ENCODE measurements at regions of chr11 and their contacts with region 1.

Region 1: GRCh38 chr11:12224537-12224893 is 114.1 kb downstream of the MICAL2 start:
- DNase-seq: peak; percentile 94
- H3K4me3 Mint-ChIP-seq: peak overlapping the region; percentile 62
- H3K27ac Mint-ChIP-seq: peak overlapping the region; percentile 93
- H3K4me1 Mint-ChIP-seq: peaks cover 66% of the 10 kb centered on the region
- H3K27me3 Mint-ChIP-seq: no peaks in the 10 kb centered on the region

Region 2: DNA sequence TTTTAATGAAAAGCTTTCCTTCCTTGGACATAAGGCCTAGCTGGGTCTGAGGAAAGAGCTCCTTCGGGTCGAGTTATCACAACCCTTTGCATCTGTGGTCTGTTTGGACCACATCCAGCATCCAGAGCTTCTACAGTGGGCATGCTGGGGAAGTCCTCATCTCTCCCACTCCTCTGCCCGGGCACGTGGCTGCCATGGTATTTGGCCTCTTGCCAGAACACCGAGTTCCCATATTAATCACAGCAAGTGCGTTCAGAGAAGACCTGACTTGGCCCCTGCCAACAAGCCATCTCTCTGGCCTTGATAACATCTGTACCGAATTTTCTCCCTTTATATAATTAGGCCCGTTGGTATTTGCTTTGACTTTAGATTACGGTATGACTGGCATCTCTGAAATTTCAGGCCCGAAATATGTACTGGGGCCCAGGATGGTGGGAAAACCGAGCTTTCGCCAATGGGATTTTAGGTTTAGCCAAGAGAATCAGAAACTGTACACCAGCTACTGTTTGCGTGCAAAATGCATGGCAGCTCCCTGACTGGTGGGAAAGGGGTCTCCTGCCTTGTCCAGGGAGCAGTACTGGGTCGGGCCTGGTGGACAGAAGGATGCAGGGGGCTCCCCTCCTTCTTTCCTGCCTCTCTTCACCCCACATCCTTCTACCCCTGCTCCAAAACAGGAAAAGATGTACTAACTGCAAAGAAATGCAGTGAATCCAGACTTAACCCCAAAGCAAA is 24.1 kb before region 1 on chr11:
- CTCF ChIA-PET with region 1: interaction called, 37 read pairs
- POLR2A ChIA-PET with region 1: interaction called, 4 read pairs
- DNase-seq: no peak
- H3K4me3 Mint-ChIP-seq: no peak overlapping the region
- H3K27ac Mint-ChIP-seq: no peak overlapping the region
- H3K4me1 Mint-ChIP-seq: peaks cover 57% of the 10 kb centered on the region
- H3K27me3 Mint-ChIP-seq: no peaks in the 10 kb centered on the region

Region 3: DNA sequence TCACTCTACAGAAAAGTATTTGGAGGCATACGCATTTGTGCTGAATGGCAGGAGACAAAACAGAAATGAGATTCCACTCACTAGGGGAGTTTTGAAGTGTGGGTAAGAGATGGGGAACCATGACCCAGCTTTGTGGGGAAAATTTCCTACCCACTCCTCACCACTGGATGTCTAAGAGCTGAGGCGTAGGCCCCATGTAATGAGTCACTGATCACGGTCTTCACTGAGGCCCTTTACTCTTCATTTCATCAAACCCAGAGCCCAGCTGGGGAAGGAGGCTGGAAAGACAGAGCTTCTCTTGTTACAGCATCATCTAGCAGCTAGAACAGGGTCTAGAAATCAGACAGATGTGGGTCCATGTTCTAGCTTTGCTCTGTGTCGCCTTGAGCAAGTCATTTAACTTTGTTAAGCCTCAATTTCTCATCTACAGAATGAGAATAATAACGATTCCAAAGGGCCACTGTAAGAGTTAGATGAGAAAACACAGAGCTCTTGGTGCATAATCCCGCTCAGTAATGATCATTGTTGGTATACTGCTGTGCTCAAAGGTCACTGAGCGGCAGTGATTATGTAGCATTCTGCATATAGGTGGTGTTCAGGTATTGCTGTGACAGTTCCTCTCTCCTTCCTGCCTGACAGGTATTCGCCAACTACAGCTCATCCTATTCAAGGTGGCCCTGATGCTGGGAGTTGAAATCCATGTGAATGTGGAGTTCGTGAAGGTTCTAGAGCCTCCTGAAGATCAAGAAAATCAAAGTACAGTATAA is 16.9 kb before region 1 on chr11:
- CTCF ChIA-PET with region 1: interaction called, 37 read pairs
- POLR2A ChIA-PET with region 1: no interaction called
- DNase-seq: no peak
- H3K4me3 Mint-ChIP-seq: no peak overlapping the region
- H3K27ac Mint-ChIP-seq: no peak overlapping the region
- H3K4me1 Mint-ChIP-seq: peaks cover 23% of the 10 kb centered on the region
- H3K27me3 Mint-ChIP-seq: no peaks in the 10 kb centered on the region

Region 4: DNA sequence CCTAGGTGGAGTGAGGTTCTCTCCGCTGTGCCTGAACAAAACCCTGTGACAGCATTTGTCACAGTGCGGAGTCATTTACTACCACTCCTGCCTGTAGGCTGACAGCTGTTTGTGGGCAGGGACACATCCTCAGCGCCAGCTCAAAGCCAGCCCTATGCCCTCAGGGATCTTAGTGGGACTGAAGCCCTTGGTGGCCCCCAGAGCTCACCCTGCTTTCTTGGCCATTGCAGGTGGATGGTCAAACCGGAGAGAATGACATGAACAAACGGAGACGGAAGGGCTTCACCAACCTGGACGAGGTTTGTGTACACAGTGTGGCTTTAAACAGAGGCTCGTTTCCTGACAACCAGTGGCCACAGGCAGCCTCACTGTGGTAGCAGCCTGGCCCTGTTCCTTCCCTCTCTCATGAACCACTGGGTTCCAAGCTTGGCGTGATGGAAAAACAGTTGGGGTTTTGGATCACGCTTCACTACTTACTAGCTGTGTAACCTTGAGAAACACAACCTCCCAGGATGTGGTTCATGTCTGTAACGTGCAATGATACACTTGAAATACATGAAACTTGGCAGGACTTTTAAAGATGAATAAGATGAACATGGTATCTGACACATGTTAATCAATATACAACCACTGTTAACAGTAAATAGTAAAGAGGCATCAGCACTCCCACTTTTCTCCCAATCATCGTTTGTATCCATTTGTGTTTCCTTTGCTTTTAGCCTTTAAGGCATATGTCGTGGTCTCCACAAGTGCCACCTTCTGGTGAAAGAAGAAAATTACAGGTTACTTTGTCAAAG is 11.6 kb after region 1 on chr11:
- CTCF ChIA-PET with region 1: interaction called, 49 read pairs
- POLR2A ChIA-PET with region 1: interaction called, 6 read pairs
- DNase-seq: peak; percentile 75
- H3K4me3 Mint-ChIP-seq: peak overlapping the region; percentile 56
- H3K27ac Mint-ChIP-seq: peak overlapping the region; percentile 95
- H3K4me1 Mint-ChIP-seq: peaks cover 38% of the 10 kb centered on the region
- H3K27me3 Mint-ChIP-seq: no peaks in the 10 kb centered on the region

Region 5: DNA sequence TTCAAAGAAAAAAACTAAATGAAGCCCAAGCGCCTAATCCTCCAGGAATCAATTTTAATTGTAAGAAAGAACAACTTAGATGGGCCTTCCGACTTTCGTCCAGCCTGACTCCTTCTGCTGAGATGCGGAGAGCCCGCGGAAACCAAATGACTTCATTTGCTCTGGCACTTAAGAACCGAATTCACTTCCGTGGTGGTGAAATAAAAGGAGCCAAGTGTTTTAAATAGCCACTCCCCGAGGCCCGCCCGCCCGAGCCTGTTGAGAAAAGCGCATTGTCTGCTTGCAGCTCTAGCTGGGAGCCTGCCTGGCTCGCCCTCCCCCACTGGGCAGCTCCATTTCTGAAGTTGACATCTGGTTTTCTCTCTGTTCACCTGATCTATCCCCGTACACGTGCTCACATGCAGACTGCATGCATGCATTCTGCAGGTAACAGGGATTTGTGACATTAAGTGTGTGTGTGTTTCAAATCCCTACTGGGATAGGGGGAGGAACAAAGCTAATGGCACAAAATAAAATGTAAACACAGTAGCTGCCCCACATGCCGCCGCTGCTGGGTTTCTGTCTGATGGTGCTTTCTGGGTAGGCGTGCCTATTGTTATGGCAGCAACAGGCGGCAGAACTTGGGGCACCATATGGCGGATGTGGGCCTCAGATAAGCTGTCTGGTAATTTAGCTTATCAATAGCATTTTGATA is 455.9 kb after region 1 on chr11:
- CTCF ChIA-PET with region 1: no interaction called
- POLR2A ChIA-PET with region 1: no interaction called
- DNase-seq: peak; percentile 23
- H3K4me3 Mint-ChIP-seq: no peak overlapping the region
- H3K27ac Mint-ChIP-seq: no peak overlapping the region
- H3K4me1 Mint-ChIP-seq: peaks cover 12% of the 10 kb centered on the region
- H3K27me3 Mint-ChIP-seq: peaks cover 90% of the 10 kb centered on the region

Measured in activated CD4-positive, alpha-beta T cell treated with anti-CD3 and anti-CD28 coated beads, Interleukin-2, amount 10 ng/mL, durations not matched to agents 7 days and 5 days (primary cell).